ENCODE measurements at regions of chr3 and their contacts with region 1.

Region 1: GRCh38 chr3:63967675-63968611 is 55.4 kb downstream of the PSMD6 start:
- DNase-seq: peak; percentile 21 to 90 (median 50)
- ATAC-seq: peak; percentile 73
- H3K4me3 ChIP-seq: peak overlapping the region; percentile 67 to 70
- H3K4me3 Mint-ChIP-seq: peak overlapping the region; percentile 93
- H3K27ac ChIP-seq: peak overlapping the region; percentile 83 to 87
- H3K27ac Mint-ChIP-seq: peak overlapping the region; percentile 98
- H3K4me1 ChIP-seq: peaks cover 54% of the 10 kb centered on the region
- H3K4me1 Mint-ChIP-seq: peaks cover 69% of the 10 kb centered on the region
- H3K27me3 ChIP-seq: no peaks in the 10 kb centered on the region
- H3K27me3 Mint-ChIP-seq: no peaks in the 10 kb centered on the region
- CTCF ChIP-seq: no peak

Region 2: DNA sequence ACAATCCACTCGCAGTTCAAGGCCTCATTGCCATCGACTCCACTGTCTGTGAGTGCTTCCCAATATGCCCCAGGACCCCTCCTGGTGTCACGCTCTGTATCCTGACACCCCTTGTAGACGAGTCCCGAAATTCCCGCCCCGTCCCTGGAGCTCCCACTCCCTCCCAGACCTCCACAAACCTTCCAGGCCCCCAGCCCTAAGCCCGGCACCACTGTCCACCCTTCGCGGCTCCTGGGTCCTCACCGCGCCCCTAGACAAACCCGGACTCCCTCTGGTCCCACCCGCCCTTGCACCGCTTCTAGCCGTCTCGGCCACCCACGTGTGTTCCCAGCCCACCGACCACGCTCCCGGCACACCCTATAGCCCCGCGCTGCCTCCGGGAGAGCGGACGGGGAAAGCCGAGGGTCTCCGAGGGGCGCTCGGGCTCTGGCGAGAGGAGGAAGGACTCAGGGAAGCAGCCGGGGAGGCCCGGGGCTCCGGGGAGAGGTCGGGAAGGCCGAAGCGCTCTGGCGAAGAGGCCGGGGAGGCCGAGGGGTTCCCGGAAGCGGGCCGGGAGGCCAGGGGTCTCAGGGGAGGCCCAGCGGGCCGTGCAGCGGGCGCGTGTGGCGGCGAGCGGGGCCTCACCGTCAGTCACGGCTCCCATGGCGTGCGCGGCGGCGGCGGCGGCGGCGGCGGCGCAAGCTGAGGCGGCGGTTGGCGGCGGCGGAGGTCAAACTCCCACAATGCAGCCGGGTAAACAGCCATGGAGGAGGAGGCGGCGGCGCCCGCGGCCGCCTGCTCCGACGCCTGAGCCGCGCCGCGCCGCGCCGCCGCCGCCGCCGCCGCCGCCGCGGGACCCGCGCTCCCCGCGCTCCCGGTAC is 104.6 kb before region 1 on chr3 and contains the starts of genes ATXN7 and THOC7:
- CTCF ChIA-PET with region 1: no interaction called
- POLR2A ChIA-PET with region 1: interaction called, 3 read pairs
- intact Hi-C with region 1: loop called in 1 of 2 experiments (anchors 5 kb)
- DNase-seq: peak; percentile 45 to 85 (median 70)
- ATAC-seq: peak; percentile 75
- H3K4me3 ChIP-seq: peak within 1 kb of the TSS; percentile 71 to 89
- H3K4me3 Mint-ChIP-seq: peak within 1 kb of the TSS; percentile 94
- H3K27ac ChIP-seq: peak within 1 kb of the TSS; percentile 60 to 63
- H3K27ac Mint-ChIP-seq: peak within 1 kb of the TSS; percentile 93
- H3K4me1 ChIP-seq: peaks cover 19% of the 10 kb centered on the region
- H3K4me1 Mint-ChIP-seq: peaks cover 64% of the 10 kb centered on the region
- H3K27me3 ChIP-seq: no peaks in the 10 kb centered on the region
- H3K27me3 Mint-ChIP-seq: no peaks in the 10 kb centered on the region
- CTCF ChIP-seq: no peak
- total RNA-seq, gene ATXN7: 273 to 278 TPM
- total RNA-seq, gene THOC7: 23.0 to 25.5 TPM

Region 3: DNA sequence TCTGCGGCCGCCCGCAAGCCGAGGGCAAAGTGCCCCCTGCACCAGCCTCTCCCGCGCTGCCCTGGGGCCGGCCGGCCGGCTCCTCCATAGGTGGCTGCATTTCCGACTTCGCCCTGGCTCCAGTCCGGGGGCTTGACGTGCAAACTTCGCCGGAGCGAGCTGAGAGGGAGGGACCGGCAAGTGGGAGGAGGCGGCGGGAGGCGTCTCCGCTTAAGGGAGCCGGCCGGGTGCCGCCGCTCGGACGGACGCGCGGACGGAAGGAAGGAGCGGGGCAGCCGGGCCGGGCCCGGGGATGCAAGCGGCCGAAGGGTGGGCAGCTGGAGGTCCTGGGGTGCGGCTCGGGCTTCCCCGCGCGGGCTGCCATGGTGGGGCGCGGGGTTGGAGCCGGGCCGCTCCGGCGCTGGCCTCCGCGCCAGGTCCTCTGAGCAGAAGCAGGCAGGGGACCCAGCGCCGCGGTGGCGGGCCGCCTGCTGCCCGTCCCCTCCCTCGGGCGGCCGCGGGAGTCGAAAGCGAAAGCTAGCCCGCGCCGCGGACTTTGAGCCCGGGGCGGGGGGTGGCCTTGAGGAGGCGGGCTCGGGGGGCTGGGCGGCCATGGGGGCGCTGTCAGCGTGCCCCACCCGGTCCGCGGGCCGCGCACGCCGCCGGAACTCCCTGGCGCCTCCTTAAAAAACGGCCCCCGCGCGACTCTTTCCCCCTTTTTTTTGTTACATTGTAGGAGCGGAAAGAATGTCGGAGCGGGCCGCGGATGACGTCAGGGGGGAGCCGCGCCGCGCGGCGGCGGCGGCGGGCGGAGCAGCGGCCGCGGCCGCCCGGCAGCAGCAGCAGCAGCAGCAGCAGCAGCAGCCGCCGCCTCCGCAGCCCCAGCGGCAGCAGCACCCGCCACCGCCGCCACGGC is 55.8 kb before region 1 on chr3 and contains the start of gene SCAANT1:
- CTCF ChIA-PET with region 1: no interaction called
- POLR2A ChIA-PET with region 1: interaction called, 13 read pairs
- intact Hi-C with region 1: loop called (anchors 1 to 2 kb)
- DNase-seq: peak; percentile 64 to 92 (median 81)
- ATAC-seq: peak; percentile 66
- H3K4me3 ChIP-seq: peak within 1 kb of the TSS; percentile 76 to 85
- H3K4me3 Mint-ChIP-seq: peak within 1 kb of the TSS; percentile 92
- H3K27ac ChIP-seq: peak within 1 kb of the TSS; percentile 82 to 84
- H3K27ac Mint-ChIP-seq: peak within 1 kb of the TSS; percentile 95
- H3K4me1 ChIP-seq: peaks cover 15% of the 10 kb centered on the region
- H3K4me1 Mint-ChIP-seq: peaks cover 42% of the 10 kb centered on the region
- H3K27me3 ChIP-seq: no peaks in the 10 kb centered on the region
- H3K27me3 Mint-ChIP-seq: no peaks in the 10 kb centered on the region
- CTCF ChIP-seq: no peak
- total RNA-seq, gene SCAANT1: not detected

Region 4: GRCh38 chr3:63993653-63994079 is 25.7 kb after region 1 on chr3:
- CTCF ChIA-PET with region 1: interaction called, 313 read pairs
- POLR2A ChIA-PET with region 1: interaction called, 9 read pairs
- intact Hi-C with region 1: loop called in 1 of 2 experiments (anchors 1 kb)
- DNase-seq: peak in 7 of 9 experiments; percentile 34 to 79 (median 62)
- ATAC-seq: peak; percentile 92
- H3K4me3 ChIP-seq: no peak overlapping the region
- H3K4me3 Mint-ChIP-seq: no peak overlapping the region
- H3K27ac ChIP-seq: no peak overlapping the region
- H3K27ac Mint-ChIP-seq: peak overlapping the region; percentile 55
- H3K4me1 ChIP-seq: peaks cover 11% of the 10 kb centered on the region
- H3K4me1 Mint-ChIP-seq: peaks cover 60% of the 10 kb centered on the region
- H3K27me3 ChIP-seq: no peaks in the 10 kb centered on the region
- H3K27me3 Mint-ChIP-seq: no peaks in the 10 kb centered on the region
- CTCF ChIP-seq: peak; percentile 77

Region 5: DNA sequence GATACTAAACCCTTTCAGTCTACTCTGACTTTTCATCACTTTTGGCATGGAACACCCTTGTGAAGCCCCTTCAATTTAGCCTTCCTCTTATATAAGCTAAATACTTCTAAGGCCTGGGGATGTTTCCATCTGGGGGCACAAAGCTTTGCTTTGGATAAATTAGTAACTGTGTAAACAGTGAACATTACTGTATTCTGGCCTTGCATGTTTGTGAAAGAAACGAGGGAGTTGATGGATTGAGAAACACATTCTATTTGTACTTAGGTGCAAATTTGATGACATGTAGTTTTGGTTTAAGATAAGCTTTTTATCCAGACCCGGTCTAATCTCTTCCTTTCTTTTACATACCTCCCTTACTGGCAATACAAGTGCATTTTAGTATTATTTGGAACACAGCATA is 35.6 kb after region 1 on chr3:
- CTCF ChIA-PET with region 1: interaction called, 313 read pairs
- POLR2A ChIA-PET with region 1: interaction called, 10 read pairs
- intact Hi-C with region 1: no loop called
- DNase-seq: no peak
- ATAC-seq: no peak
- H3K4me3 ChIP-seq: no peak overlapping the region
- H3K4me3 Mint-ChIP-seq: no peak overlapping the region
- H3K27ac ChIP-seq: no peak overlapping the region
- H3K27ac Mint-ChIP-seq: peak overlapping the region; percentile 1
- H3K4me1 ChIP-seq: no peaks in the 10 kb centered on the region
- H3K4me1 Mint-ChIP-seq: peaks cover 19% of the 10 kb centered on the region
- H3K27me3 ChIP-seq: no peaks in the 10 kb centered on the region
- H3K27me3 Mint-ChIP-seq: no peaks in the 10 kb centered on the region
- CTCF ChIP-seq: no peak

Region 6: GRCh38 chr3:64023187-64023848 is 55.4 kb after region 1 on chr3 and contains the start of gene PSMD6:
- CTCF ChIA-PET with region 1: interaction called, 50 read pairs
- POLR2A ChIA-PET with region 1: interaction called, 18 read pairs
- intact Hi-C with region 1: loop called (anchors 2 kb)
- DNase-seq: peak; percentile 86 to 96 (median 93)
- ATAC-seq: peak; percentile 94
- H3K4me3 ChIP-seq: peak within 1 kb of the TSS; percentile 90 to 96
- H3K4me3 Mint-ChIP-seq: peak within 1 kb of the TSS; percentile 91
- H3K27ac ChIP-seq: peak within 1 kb of the TSS; percentile 86 to 89
- H3K27ac Mint-ChIP-seq: peak within 1 kb of the TSS; percentile 93
- H3K4me1 ChIP-seq: peaks cover 29% of the 10 kb centered on the region
- H3K4me1 Mint-ChIP-seq: peaks cover 33% of the 10 kb centered on the region
- H3K27me3 ChIP-seq: no peaks in the 10 kb centered on the region
- H3K27me3 Mint-ChIP-seq: peaks cover 14% of the 10 kb centered on the region
- CTCF ChIP-seq: peak; percentile 99
- total RNA-seq, gene PSMD6: 134 to 138 TPM

Measured in CD8-positive, alpha-beta T cell (primary cell).